Common myeloid progenitor, CD34-positive (primary cell): ENCODE measurements at regions of chr10 and their contacts with region 1.

Region 1: DNA sequence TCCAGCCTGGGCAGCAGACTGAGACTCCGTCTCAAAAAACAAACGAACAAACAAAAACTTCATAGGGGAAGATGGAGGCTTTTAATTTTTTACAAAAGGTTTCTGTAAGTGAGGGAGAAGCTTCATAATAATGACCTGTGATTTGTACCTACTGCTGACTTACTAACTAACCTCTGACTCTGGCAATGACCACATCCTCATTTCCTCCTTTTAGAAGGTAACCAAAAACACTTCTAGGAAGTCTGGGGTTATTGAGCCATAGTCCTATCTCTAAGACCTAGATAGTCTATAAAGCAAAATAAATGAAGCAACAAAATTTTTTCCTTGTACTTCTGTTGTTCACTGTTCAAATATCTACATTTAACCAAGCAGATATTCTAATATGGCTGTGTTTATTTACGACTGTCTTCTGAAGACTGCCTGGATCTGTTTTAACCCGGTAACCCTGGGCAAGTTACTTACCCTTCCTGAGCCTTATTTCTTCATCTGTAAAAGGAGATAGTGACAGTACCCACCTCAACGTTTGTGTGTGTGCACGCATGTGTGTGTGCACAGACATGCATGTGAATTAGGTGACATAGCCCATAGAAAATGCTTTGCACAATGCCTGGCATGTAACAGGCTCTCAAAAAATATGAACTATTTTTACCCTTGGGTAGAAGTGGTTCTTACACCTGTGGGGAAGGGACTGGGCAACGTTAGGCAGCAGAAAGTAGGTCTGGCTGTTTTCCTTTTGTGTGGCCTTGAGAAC is 30.8 kb upstream of the SMNDC1 start:
- DNase-seq: peak in 2 of 3 donors; percentile 32 to 45
- H3K4me3 ChIP-seq: no peak overlapping the region
- H3K27ac ChIP-seq: no peak overlapping the region
- H3K4me1 ChIP-seq: peaks cover 0 to 11% (median 0%) of the 10 kb centered on the region in 4 experiments
- H3K27me3 ChIP-seq: no peaks in the 10 kb centered on the region

Region 2: DNA sequence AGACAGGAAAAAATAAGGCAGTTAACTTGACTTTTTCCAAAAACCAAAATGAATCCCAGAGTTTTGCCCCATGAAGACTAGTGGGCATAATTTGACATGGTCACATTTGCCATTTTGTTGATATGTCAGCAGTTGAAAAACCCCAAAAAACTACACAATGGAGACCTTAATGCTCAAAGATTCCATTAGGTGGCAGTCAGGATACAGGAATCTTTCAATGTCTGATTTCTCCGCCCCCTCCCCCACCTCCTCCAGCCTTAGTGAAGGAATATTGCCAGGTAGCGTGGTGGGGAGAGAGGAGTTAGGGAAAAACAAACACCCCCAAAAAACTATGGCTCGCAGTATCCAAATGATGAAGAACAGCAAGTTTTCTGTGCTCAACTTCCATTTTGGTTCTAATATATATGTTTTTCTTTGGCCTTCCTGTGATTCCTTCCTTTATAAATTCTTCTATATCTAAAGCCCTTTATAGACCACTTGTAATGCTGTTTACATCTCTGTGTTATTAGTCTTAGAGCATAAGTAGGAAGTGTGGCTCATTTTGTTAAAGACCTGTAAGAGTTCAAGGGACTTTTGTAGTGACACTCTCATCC is 24.0 kb before region 1 on chr10:
- CTCF ChIA-PET with region 1: interaction called, 14 read pairs
- POLR2A ChIA-PET with region 1: no interaction called
- DNase-seq: peak; percentile 61 to 69 (median 68)
- H3K4me3 ChIP-seq: peak overlapping the region in 1 of 7 experiments; percentile 59
- H3K27ac ChIP-seq: no peak overlapping the region
- H3K4me1 ChIP-seq: peaks cover 14 to 34% (median 25%) of the 10 kb centered on the region in 4 experiments
- H3K27me3 ChIP-seq: no peaks in the 10 kb centered on the region

Region 3: GRCh38 chr10:110324201-110324804 is 11.2 kb before region 1 on chr10:
- CTCF ChIA-PET with region 1: interaction called, 12 read pairs
- POLR2A ChIA-PET with region 1: no interaction called
- DNase-seq: no peak
- H3K4me3 ChIP-seq: no peak overlapping the region
- H3K27ac ChIP-seq: no peak overlapping the region
- H3K4me1 ChIP-seq: no peaks in the 10 kb centered on the region
- H3K27me3 ChIP-seq: no peaks in the 10 kb centered on the region

Region 4: DNA sequence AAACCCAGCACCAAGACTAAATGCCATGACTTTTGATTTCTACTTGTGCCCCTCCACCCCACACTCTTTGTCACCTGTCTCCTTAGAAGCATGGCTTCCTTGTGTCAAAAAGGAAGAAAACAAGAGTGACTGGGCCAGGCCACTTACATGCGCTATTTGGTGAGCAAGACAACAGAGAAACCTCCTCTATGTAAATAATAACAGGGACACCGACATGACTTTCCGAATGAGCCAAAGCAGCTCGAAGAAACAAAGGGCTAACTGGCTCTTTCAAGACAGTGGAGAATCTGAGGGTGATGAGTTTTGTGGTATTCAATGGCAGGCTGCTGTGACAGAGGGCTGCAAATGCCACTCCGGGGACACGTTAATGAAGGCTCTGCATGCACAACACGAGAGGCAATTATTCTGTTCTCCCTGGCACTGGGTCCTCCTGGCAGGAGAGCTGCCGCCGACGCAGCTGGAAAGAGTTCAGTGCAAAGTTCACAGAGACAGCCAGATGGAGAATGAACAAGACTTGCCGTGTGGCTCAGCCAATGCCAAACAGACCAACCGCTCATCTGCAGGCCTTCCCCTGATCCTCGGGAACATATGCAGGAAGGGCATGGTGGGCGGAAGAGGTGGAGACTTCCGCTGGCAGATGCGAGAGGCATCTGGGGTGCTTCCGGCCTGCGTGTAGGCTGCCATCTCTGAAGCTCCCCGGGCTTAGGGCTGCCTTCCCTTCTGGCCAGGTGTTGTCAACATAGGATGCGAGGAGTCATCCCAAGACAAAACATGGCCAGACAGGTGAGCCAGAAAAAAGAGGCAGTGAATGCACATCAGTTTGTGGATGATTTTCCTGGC is 28.3 kb after region 1 on chr10:
- CTCF ChIA-PET with region 1: no interaction called
- POLR2A ChIA-PET with region 1: no interaction called
- DNase-seq: no peak
- H3K4me3 ChIP-seq: no peak overlapping the region
- H3K27ac ChIP-seq: no peak overlapping the region
- H3K4me1 ChIP-seq: peaks cover 0 to 9% (median 4%) of the 10 kb centered on the region in 4 experiments
- H3K27me3 ChIP-seq: no peaks in the 10 kb centered on the region

Region 5: DNA sequence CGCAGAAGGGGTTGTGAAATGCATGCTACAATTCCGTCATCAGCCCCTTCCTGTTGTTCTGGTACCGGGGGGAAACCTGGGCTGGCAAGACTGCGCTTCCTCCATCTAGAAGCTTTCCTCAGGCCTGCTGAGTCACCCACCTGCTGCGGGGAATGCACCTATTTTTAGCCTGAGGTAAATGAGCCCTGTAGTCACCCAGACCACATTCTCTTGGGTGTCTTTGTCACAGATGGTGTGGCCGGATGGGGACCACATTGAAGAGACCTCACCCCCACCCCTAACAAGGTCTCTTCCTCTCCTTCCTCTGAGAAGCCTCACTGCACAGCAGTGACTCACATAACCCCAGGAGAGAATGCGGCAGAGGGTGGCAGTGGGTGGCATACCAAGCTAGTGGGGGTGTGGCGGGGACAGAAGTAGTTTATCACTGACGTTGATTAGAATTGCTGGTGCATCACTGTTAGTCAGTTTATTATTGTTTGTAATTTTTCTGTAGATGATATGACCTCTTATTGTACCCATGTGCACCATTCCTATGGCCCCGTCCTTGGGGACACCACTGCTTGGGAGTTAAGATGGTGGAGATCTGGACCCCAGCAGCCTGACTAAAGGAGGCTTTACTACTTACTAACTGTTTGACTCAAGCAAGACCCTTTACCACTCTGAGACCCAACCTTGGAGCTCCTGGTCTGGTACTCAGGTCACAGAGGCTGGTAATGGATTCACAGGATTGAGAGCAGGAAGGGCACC is 79.2 kb after region 1 on chr10:
- CTCF ChIA-PET with region 1: no interaction called
- POLR2A ChIA-PET with region 1: no interaction called
- DNase-seq: peak; percentile 91 to 100 (median 99)
- H3K4me3 ChIP-seq: peak overlapping the region in 3 of 7 experiments; percentile 2 to 26 (median 21)
- H3K27ac ChIP-seq: peak overlapping the region in 1 of 2 experiments; percentile 42
- H3K4me1 ChIP-seq: peaks cover 18 to 68% (median 44%) of the 10 kb centered on the region in 4 experiments
- H3K27me3 ChIP-seq: no peaks in the 10 kb centered on the region